Psoas muscle (tissue), 8 donors: ENCODE measurements at regions of chr11 and their contacts with region 1.

Region 1: DNA sequence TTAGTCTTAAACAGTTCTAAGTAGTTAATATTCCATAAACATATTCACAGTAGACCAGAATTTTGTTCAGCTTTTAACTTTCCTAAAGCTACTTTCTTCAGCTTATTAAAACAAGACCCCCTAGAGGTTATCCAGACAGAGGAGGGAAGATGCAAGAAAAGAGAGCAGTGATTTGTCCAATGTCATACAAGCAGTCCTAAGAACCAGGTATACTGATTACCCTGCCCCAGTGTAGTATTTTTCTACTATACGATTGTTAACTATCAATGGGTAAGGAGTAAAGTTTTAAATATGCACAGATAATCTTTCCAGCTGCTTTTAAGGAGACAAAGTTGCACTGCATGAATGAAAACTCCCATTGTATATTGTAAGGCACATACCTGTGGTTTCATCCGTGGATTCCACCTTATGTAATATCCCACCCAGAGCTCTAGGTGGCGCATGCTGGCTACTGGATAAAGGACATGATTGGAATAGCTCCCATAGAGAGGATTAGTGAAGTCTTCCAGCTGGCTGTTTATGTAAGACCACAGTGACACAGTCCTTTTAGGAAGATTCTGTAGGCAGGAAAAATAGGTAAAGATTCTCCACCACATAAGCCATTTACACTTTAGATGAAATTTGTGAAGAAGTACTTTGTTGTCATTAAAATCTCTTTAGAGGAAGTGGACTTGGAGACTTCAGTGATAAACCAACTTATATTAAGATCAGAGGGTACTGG is 45.6 kb downstream of the CEP57 start:
- DNase-seq: peak in 1 of 2 donors; percentile 35
- ATAC-seq: peak; percentile 94 to 99 (median 98)
- H3K4me3 ChIP-seq: no peak overlapping the region
- H3K27ac ChIP-seq: peak overlapping the region; percentile 6
- H3K4me1 ChIP-seq: no peaks in the 10 kb centered on the region
- H3K27me3 ChIP-seq: no peaks in the 10 kb centered on the region
- CTCF ChIP-seq: peak; percentile 88

Region 2: GRCh38 chr11:95767498-95767897 is 68.4 kb before region 1 on chr11:
- intact Hi-C with region 1: no loop called
- DNase-seq: no peak
- ATAC-seq: peak in 1 of 4 donors; percentile 63
- H3K4me3 ChIP-seq: no peak overlapping the region
- H3K27ac ChIP-seq: no peak overlapping the region
- H3K4me1 ChIP-seq: no peaks in the 10 kb centered on the region
- H3K27me3 ChIP-seq: no peaks in the 10 kb centered on the region
- CTCF ChIP-seq: no peak

Region 3: DNA sequence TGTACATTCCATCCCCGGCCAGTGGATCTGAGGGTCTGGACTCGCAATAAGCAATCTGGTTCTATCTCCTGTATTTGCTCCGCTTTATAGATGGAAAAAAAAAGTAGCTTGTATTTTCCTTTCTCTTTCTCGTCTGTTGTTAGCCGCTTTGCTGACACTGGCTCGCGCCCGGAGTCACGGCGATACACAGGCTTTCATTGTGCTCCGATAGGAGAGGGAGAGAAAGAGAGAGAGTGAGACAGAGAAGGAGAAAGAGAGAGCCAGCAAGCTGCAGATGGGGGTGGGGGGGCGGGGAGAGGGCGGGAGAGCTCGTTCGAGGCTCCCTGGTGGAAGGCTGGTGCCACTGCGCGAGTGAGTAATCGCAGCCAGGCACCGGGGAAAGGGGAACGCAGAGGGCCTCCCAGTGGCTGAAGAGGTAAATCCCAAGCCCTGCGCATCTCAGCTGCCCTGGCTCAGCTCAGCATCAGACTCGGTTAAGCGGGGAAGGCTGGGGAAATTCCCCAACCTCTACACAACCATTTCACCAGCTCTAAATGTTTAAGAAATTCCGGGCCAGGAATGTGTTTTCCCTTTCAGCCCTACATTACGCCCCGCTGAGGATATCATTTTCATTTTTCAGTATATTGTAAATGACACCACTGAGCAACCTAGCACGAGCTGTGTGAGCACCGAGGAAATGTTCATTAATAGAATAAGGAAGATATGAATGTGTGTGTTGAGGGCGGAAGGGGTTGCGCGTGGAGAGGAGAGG is 507.2 kb after region 1 on chr11 and contains the start of gene MAML2:
- intact Hi-C with region 1: loop called (anchors 5 kb)
- DNase-seq: peak; percentile 92 to 94
- ATAC-seq: peak; percentile 97 to 99 (median 98)
- H3K4me3 ChIP-seq: peak within 1 kb of the TSS; percentile 82
- H3K27ac ChIP-seq: peak within 1 kb of the TSS; percentile 57
- H3K4me1 ChIP-seq: peaks cover 10% of the 10 kb centered on the region
- H3K27me3 ChIP-seq: no peaks in the 10 kb centered on the region
- CTCF ChIP-seq: peak; percentile 92
- total RNA-seq, gene MAML2: 1.5 to 3.7 (median 2.1) TPM

Region 4: GRCh38 chr11:96389720-96390487 is 554.0 kb after region 1 on chr11 and contains the starts of genes CCDC82 and JRKL:
- intact Hi-C with region 1: loop called in 1 of 2 experiments (anchors 10 kb)
- DNase-seq: peak; percentile 96 to 98
- ATAC-seq: peak; percentile 99 to 100 (median 100)
- H3K4me3 ChIP-seq: peak within 1 kb of the TSS; percentile 93
- H3K27ac ChIP-seq: peak within 1 kb of the TSS; percentile 92
- H3K4me1 ChIP-seq: peaks cover 12% of the 10 kb centered on the region
- H3K27me3 ChIP-seq: no peaks in the 10 kb centered on the region
- CTCF ChIP-seq: no peak
- total RNA-seq, gene CCDC82: 6.3 to 12.3 (median 8.6) TPM
- total RNA-seq, gene JRKL: 4.2 to 6.7 (median 5.3) TPM